ENCODE measurements at regions of chr6 and their contacts with region 1.

Region 1: DNA sequence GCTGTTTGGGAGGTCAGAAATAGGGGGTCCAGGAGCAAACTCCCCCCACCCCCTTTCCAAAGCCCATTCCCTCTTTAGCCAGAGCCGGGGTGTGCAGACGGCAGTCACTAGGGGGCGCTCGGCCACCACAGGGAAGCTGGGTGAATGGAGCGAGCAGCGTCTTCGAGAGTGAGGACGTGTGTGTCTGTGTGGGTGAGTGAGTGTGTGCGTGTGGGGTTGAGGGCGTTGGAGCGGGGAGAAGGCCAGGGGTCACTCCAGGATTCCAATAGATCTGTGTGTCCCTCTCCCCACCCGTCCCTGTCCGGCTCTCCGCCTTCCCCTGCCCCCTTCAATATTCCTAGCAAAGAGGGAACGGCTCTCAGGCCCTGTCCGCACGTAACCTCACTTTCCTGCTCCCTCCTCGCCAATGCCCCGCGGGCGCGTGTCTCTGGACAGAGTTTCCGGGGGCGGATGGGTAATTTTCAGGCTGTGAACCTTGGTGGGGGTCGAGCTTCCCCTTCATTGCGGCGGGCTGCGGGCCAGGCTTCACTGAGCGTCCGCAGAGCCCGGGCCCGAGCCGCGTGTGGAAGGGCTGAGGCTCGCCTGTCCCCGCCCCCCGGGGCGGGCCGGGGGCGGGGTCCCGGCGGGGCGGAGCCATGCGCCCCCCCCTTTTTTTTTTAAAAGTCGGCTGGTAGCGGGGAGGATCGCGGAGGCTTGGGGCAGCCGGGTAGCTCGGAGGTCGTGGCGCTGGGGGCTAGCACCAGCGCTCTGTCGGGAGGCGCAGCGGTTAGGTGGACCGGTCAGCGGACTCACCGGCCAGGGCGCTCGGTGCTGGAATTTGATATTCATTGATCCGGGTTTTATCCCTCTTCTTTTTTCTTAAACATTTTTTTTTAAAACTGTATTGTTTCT is at the start of gene VEGFA:
- DNase-seq: peak; percentile 95
- ATAC-seq: peak; percentile 74
- H3K4me3 Mint-ChIP-seq: peak within 1 kb of the TSS; percentile 96
- H3K27ac Mint-ChIP-seq: peak within 1 kb of the TSS; percentile 91
- H3K4me1 Mint-ChIP-seq: peaks cover 18% of the 10 kb centered on the region
- H3K27me3 Mint-ChIP-seq: peaks cover 4% of the 10 kb centered on the region
- total RNA-seq, gene VEGFA: 64.6 to 72.8 TPM

Region 2: DNA sequence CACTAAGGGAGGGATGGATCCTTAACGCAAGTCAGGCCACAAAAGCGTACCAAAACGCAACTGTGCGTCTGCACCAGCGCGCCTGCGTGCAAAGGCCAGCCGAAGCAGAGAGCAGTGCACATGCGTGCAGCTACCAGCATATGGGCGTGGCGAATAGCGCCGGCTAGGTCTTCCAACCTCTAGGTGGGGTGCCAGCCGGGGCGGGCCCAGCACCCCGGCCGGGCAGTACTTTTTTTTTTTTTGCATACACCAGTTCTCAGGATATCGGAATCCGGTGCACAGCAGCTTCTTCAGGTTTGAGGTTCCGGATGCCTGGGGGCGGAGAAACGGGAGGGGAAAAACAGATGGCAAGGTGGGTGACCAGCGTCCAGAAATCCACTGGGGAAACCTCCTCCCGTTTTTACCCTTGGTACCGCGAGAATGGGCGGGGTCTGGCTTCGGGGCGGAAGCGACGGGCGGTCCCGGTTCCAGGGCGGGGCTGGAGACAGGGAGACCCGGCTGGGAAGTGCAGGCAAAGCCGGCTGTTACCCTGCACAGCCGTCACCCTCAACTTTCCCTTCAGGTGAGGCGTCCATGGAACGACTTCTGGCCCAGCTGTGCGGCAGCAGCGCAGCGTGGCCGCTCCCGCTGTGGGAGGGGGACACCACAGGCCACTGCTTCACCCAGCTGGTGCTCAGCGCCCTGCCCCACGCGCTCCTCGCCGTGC is 342.2 kb before region 1 on chr6 and contains the start of gene ABCC10:
- CTCF ChIA-PET with region 1: no interaction called
- POLR2A ChIA-PET with region 1: no interaction called
- intact Hi-C with region 1: loop called in 1 of 2 experiments (anchors 2 kb)
- DNase-seq: peak; percentile 97
- ATAC-seq: peak; percentile 97
- H3K4me3 Mint-ChIP-seq: peak within 1 kb of the TSS; percentile 94
- H3K27ac Mint-ChIP-seq: peak within 1 kb of the TSS; percentile 97
- H3K4me1 Mint-ChIP-seq: peaks cover 21% of the 10 kb centered on the region
- H3K27me3 Mint-ChIP-seq: no peaks in the 10 kb centered on the region
- total RNA-seq, gene ABCC10: 27.8 to 29.0 TPM

Region 3: GRCh38 chr6:43629505-43630300 is 140.1 kb before region 1 on chr6:
- CTCF ChIA-PET with region 1: no interaction called
- POLR2A ChIA-PET with region 1: interaction called, 4 read pairs
- intact Hi-C with region 1: loop called in 1 of 2 experiments (anchors 1 kb)
- DNase-seq: peak; percentile 96
- ATAC-seq: peak; percentile 77
- H3K4me3 Mint-ChIP-seq: peak overlapping the region; percentile 88
- H3K27ac Mint-ChIP-seq: peak overlapping the region; percentile 100
- H3K4me1 Mint-ChIP-seq: peaks cover 33% of the 10 kb centered on the region
- H3K27me3 Mint-ChIP-seq: no peaks in the 10 kb centered on the region

Region 4: DNA sequence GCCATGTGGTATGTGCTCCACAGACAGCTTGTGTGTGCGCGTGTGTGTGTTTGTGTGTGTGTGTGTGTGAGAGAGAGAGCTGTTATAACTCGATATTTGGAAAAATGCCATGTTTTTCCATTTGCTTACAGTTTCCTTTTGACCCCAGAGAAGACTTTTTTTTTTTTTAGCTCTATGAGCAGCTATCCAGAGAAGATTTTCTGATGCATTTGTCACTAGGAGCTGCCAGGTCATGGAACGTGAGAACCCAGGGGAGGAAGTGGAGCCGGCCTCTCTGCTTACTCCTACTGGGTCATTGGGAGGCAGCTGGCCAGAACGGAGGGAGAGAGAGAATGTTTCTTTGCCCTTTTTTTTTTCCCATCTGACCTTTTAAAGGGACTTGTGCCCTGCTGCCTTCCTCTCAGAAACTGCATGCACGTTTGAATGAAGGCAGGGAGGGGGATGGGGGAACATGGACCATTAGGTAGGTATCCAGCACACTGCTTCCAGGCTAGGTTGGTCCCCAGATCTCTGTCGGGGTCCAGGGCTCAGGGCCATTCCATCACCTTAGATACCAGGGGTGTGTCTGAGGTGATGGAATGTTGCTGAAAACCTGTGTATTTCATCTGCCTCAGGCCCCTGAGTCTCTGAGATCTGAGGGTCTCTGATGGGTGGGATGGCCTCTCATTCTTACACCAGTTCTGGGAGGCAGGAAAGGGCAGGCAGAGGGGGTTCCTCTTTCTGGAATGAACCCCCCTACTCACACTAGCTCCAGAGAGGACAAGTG is 71.0 kb before region 1 on chr6:
- CTCF ChIA-PET with region 1: no interaction called
- POLR2A ChIA-PET with region 1: no interaction called
- intact Hi-C with region 1: no loop called
- DNase-seq: no peak
- ATAC-seq: no peak
- H3K4me3 Mint-ChIP-seq: no peak overlapping the region
- H3K27ac Mint-ChIP-seq: no peak overlapping the region
- H3K4me1 Mint-ChIP-seq: peaks cover 1% of the 10 kb centered on the region
- H3K27me3 Mint-ChIP-seq: peaks cover 17% of the 10 kb centered on the region

Region 5: DNA sequence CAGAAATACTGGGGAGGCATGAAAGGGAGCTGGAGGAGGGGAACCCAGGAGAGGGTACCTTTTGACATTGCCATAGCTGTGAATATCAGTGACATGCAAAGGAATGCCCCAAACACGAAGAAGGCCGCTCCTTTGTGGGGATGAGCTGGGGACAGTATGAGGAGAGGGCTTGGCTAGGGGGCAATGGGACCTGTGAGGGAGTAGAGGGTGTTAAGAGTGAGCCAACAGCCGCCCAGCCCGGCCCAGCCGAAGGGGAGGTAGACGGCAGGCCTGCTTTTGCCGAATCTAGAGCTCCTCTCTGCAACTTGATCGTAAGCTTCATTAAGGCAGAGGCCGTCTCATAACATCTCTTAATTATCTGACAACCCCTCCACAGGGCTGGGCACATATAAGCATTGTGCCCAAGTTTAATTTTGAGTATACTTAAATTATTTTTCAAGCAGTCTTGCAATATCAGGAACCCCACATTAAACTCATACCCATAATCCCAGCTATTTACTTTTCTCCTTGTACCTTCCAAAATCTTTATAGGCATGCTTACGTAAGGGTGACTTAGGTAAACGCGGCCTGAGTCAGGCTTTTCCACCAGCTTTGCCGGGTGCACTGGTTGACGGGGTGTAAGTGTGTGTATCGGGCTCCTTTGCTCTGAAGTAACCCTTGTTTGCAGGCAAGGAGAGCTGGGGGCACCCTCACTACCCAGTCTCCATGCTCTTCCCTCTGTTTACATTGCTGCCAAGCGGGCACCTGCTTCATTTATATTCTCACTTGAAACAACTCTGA is 24.6 kb before region 1 on chr6:
- CTCF ChIA-PET with region 1: interaction called, 11 read pairs
- POLR2A ChIA-PET with region 1: no interaction called
- intact Hi-C with region 1: no loop called
- DNase-seq: no peak
- ATAC-seq: no peak
- H3K4me3 Mint-ChIP-seq: no peak overlapping the region
- H3K27ac Mint-ChIP-seq: no peak overlapping the region
- H3K4me1 Mint-ChIP-seq: no peaks in the 10 kb centered on the region
- H3K27me3 Mint-ChIP-seq: peaks cover 6% of the 10 kb centered on the region

Region 6: GRCh38 chr6:44002593-44003344 is 233.0 kb after region 1 on chr6:
- CTCF ChIA-PET with region 1: interaction called, 4 read pairs
- POLR2A ChIA-PET with region 1: no interaction called
- intact Hi-C with region 1: loop called (anchors 1 to 5 kb)
- DNase-seq: peak; percentile 87
- ATAC-seq: peak; percentile 65
- H3K4me3 Mint-ChIP-seq: peak overlapping the region; percentile 58
- H3K27ac Mint-ChIP-seq: no peak overlapping the region
- H3K4me1 Mint-ChIP-seq: peaks cover 11% of the 10 kb centered on the region
- H3K27me3 Mint-ChIP-seq: peaks cover 16% of the 10 kb centered on the region

Region 7: GRCh38 chr6:44246663-44247337 is 477.0 kb after region 1 on chr6 and contains the start of gene HSP90AB1:
- CTCF ChIA-PET with region 1: interaction called, 4 read pairs
- POLR2A ChIA-PET with region 1: interaction called, 4 read pairs
- intact Hi-C with region 1: loop called (anchors 2 to 5 kb)
- DNase-seq: peak; percentile 98
- ATAC-seq: peak; percentile 86
- H3K4me3 Mint-ChIP-seq: peak within 1 kb of the TSS; percentile 97
- H3K27ac Mint-ChIP-seq: peak within 1 kb of the TSS; percentile 99
- H3K4me1 Mint-ChIP-seq: peaks cover 44% of the 10 kb centered on the region
- H3K27me3 Mint-ChIP-seq: no peaks in the 10 kb centered on the region
- total RNA-seq, gene HSP90AB1: 2,120 to 2,263 TPM